Breast epithelium (tissue), 4 donors: ENCODE measurements at regions of chr3 and their contacts with region 1.

Region 1: DNA sequence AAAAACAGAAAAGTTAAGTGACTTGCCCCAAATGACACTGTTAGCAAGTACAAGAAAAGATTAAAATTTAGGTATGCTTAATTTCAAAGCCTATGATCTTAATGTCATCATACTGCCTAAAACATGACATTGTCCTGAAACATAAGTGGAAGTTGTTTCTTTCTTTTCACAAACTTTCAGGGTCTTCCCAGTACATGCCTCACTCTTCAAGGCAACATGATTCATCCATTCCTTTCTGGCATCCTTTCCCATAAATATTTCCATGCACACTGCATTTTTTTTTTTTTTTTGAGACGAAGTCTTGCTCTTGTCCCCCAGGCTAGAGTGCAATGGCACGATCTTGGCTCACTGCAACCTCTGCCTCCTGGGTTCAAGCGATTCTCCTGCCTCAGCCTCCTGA is 42.5 kb upstream of the KPNA4 start:
- DNase-seq: no peak
- H3K4me3 ChIP-seq: no peak overlapping the region
- H3K27ac ChIP-seq: no peak overlapping the region
- H3K4me1 ChIP-seq: no peaks in the 10 kb centered on the region
- H3K27me3 ChIP-seq: no peaks in the 10 kb centered on the region
- CTCF ChIP-seq: no peak
- POLR2A ChIP-seq: no peak

Region 2: GRCh38 chr3:161444006-161444693 is 836.3 kb after region 1 on chr3:
- intact Hi-C with region 1: loop called (anchors 5 kb)
- DNase-seq: no peak
- H3K4me3 ChIP-seq: no peak overlapping the region
- H3K27ac ChIP-seq: no peak overlapping the region
- H3K4me1 ChIP-seq: no peaks in the 10 kb centered on the region
- H3K27me3 ChIP-seq: no peaks in the 10 kb centered on the region
- CTCF ChIP-seq: no peak
- POLR2A ChIP-seq: no peak

Region 3: GRCh38 chr3:161475901-161476300 is 868.1 kb after region 1 on chr3:
- intact Hi-C with region 1: no loop called
- DNase-seq: no peak
- H3K4me3 ChIP-seq: no peak overlapping the region
- H3K27ac ChIP-seq: no peak overlapping the region
- H3K4me1 ChIP-seq: no peaks in the 10 kb centered on the region
- H3K27me3 ChIP-seq: no peaks in the 10 kb centered on the region
- CTCF ChIP-seq: no peak
- POLR2A ChIP-seq: no peak